Transverse colon (tissue), 4 donors: ENCODE measurements at regions of chr5 and their contacts with region 1.

Region 1: GRCh38 chr5:176537608-176538504 is 654 bp upstream of the RNF44 start:
- DNase-seq: peak; percentile 99
- H3K4me3 ChIP-seq: peak overlapping the region; percentile 45 to 93 (median 90)
- H3K27ac ChIP-seq: peak overlapping the region; percentile 89 to 99 (median 98)
- H3K4me1 ChIP-seq: peaks cover 32 to 57% (median 51%) of the 10 kb centered on the region in 4 donors
- H3K27me3 ChIP-seq: no peaks in the 10 kb centered on the region
- CTCF ChIP-seq: peak in 1 of 5 experiments; percentile 13
- EP300 ChIP-seq: no peak
- POLR2A ChIP-seq: peak; percentile 79

Region 2: GRCh38 chr5:176447982-176448608 is 89.8 kb before region 1 on chr5 and contains the start of gene FAF2:
- in situ Hi-C with region 1: loop called in 1 of 4 experiments (anchors 5 kb)
- intact Hi-C with region 1: no loop called
- DNase-seq: peak; percentile 98
- H3K4me3 ChIP-seq: peak within 1 kb of the TSS; percentile 78 to 95 (median 86)
- H3K27ac ChIP-seq: peak within 1 kb of the TSS; percentile 91 to 96 (median 95)
- H3K4me1 ChIP-seq: peaks cover 10 to 24% (median 20%) of the 10 kb centered on the region in 4 donors
- H3K27me3 ChIP-seq: no peaks in the 10 kb centered on the region
- CTCF ChIP-seq: peak; percentile 94 to 100 (median 99)
- EP300 ChIP-seq: no peak
- POLR2A ChIP-seq: peak; percentile 89
- total RNA-seq, gene FAF2: 3.8 to 32.4 (median 26.5) TPM

Region 3: DNA sequence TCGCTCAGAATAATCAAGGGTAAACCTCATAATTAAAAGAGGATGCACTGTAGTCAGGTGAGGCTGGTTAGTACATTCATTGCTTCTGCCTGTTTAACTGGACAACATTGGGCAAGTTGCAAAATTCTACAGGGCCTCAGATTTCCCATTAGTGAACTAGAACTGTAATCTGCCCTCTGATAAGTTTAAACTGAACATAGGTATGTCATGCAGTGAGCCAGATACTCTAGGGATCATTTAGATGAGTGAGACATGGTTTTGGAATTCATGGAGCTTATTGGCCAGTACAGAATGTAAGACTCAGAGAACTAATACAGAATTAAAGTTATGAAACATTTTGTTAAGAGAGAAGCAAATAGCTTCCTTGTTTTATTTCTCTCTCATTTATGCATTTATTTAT is 36.5 kb before region 1 on chr5:
- in situ Hi-C with region 1: no loop called
- intact Hi-C with region 1: no loop called
- DNase-seq: no peak
- H3K4me3 ChIP-seq: no peak overlapping the region
- H3K27ac ChIP-seq: no peak overlapping the region
- H3K4me1 ChIP-seq: no peaks in the 10 kb centered on the region
- H3K27me3 ChIP-seq: no peaks in the 10 kb centered on the region
- CTCF ChIP-seq: no peak
- EP300 ChIP-seq: no peak
- POLR2A ChIP-seq: no peak

Region 4: GRCh38 chr5:176959051-176959450 is 421.2 kb after region 1 on chr5:
- in situ Hi-C with region 1: no loop called
- intact Hi-C with region 1: no loop called
- DNase-seq: no peak
- H3K4me3 ChIP-seq: no peak overlapping the region
- H3K27ac ChIP-seq: no peak overlapping the region
- H3K4me1 ChIP-seq: no peaks in the 10 kb centered on the region
- H3K27me3 ChIP-seq: no peaks in the 10 kb centered on the region
- CTCF ChIP-seq: peak in 4 of 5 experiments; percentile 42 to 52 (median 46)
- EP300 ChIP-seq: no peak
- POLR2A ChIP-seq: no peak